ENCODE measurements at regions of chr19 and their contacts with region 1.

Region 1: GRCh38 chr19:4400135-4400936 is at the start of gene SH3GL1:
- DNase-seq: peak; percentile 87 to 99 (median 91)

Region 2: DNA sequence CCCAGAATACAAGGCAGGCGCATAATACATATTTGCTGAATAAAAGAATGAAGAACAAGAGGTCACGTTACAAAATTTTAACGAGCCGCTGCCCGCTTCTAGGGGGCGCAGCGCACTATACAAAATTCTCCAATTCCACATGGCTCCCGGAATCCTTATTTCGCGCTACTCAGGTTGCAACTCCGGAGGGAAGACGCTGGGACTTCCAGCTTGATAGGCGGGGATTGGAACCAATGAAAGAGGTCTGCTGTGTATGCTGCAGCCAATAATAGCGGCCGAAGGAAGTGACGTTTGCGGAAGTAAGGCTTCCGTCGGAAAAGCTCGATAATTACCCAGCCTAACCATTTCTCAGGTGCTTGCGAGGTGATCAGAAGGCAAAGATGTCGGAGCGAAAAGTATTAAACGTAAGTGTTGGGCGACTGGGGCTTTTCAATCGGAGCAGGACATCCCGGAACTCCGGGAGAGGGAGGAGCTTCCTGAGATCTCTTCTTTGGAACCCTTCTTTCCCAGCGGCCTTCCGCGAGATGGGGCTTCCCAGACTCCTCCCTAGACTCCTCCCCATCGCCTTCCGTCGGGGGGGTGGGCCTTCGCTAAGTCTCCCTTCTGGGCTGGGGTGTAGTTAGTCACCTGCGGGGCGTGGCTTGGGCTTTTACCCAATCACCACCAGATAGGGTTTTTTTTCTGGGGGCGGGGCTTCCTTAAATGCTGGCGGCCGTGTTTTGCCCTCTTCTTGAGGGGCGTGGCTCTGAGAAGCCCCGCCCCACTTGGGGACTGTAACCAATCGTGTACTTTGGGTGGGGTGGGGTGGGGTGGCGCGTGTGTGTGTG is 153.4 kb before region 1 on chr19 and contains the start of gene YJU2:
- intact Hi-C with region 1: loop called (anchors 2 kb)
- DNase-seq: peak; percentile 88 to 99 (median 92)

Region 3: DNA sequence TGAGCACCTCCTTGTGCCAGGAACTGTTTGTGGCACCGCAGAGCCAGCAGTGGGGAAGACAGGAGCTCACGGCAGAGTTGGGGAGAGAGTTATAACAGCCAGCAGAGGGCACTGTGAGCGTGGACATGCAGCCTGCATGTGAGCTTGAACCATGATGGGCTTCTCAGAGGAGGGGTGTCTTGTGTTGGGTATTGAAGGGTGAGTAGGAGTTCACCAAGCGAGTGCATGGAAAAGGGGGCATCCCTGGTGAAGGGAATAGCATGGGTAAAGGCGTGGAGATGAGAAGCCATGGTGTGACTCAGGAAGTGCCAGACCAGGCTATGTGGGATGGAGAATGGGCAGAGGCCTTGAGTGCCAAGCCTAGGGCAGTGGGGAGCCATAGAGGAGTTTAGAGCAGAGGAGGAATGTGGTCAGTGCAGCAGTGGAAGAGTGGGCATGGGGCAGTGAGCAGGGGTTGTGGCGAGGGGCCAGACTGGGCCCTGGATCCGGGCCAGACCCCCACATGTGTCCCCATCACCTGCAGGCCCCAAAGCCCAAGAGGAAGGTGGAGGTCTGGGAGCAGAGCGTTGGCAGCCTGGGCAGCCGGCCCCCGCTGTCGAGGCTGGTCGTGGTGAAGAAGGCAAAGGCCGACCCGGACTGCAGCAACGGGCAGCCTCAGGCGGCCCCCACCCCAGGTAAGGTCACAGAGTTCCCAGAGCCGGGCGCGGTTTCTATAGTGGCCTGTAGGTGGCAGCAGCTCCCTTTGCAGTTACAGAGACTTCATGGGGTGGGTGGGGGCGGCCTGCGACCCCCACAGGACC is 133.0 kb before region 1 on chr19:
- intact Hi-C with region 1: loop called (anchors 5 kb)
- DNase-seq: peak in 8 of 10 donors; percentile 33 to 89 (median 47)

Region 4: DNA sequence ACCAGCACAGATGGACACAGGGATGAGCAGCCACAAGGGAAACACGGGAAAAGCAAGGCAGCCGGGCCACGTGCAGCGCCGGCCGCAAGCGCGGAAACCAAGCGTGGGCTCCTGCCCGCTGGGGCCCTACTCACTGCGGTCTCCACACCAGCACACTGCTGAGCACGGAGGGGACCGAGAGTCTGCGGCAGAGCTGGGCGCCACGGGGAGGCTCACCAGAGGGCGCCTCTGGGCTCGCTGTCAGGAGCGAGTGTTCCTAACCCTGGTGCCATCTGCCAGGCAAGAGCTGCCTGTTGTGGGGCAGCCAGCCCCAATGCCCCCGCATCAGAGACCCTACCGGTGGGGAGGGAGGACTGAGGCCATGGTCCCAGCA is 30.5 kb before region 1 on chr19:
- intact Hi-C with region 1: loop called (anchors 1 kb)
- DNase-seq: peak in 8 of 10 donors; percentile 61 to 96 (median 76)

Region 5: DNA sequence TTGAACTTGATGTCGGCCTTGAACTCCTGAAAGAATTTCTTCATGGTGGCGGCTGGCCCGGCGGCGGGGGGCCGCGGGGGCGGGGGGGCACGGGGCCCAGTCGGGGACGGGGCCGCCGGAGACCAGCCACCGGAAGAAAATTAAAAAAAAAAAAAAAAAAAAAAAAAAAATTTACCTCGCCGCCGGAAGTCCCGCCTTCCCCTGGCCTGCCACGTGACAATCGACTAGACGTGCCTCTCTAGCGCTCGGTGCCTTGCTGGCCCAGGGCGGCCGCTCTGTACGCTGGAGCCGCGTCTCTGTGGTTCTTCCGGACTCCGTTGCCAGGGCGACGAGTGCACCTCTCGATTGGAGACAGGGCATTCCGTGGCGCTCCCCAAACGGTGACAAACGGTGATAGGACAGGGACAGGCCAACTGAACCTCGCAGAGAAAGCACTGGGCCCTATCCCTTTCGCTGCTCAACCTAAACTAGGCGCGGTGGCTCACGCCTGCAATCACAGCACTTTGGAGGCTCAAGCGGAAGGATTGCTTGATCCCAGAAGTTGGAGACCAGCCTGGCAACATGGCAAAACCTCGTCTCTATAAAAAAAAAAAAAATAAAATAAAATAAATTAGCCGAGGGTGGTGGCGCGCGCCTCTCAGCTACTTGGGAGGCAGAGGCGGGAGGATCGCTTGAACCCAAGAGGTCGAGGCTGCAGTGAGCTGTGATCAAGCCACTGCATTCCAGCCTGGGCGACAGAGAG is 57.5 kb after region 1 on chr19 and contains the start of gene UBXN6:
- intact Hi-C with region 1: loop called (anchors 1 kb)
- DNase-seq: peak; percentile 96 to 100 (median 98)

Region 6: GRCh38 chr19:4471403-4472173 is 71.3 kb after region 1 on chr19:
- intact Hi-C with region 1: no loop called
- DNase-seq: peak; percentile 96 to 100 (median 98)